Mammary epithelial cell (primary cell): ENCODE measurements at regions of chr10 and their contacts with region 1.

Region 1: GRCh38 chr10:17029581-17030271 is 99.9 kb downstream of the CUBN start:
- DNase-seq: peak; percentile 65
- H3K4me3 ChIP-seq: no peak overlapping the region
- H3K27ac ChIP-seq: no peak overlapping the region
- H3K4me1 ChIP-seq: peaks cover 32% of the 10 kb centered on the region
- H3K27me3 ChIP-seq: no peaks in the 10 kb centered on the region
- CTCF ChIP-seq: no peak

Region 2: DNA sequence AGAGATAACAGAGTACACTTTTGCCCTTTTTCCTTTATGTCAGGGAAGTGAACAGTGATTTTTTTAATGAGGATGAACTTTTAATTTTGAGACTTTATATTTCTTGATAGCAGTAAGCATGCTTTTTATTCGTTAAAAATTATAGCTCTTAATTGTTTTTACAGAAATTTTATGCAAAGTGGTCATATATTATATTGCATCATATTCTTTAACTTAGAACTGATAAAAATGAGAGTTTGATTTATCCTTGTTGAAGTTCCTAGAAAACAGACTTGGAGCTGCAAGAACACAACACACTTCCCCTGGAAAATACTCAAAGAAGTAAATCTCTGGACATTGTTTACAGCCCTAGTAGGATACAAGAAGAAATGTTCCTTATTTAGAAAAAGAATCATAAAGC is 1148.2 kb before region 1 on chr10:
- CTCF ChIA-PET with region 1: no interaction called
- dilution Hi-C with region 1: no loop called
- in situ Hi-C with region 1: no loop called
- intact Hi-C with region 1: no loop called
- DNase-seq: no peak
- H3K4me3 ChIP-seq: no peak overlapping the region
- H3K27ac ChIP-seq: no peak overlapping the region
- H3K4me1 ChIP-seq: no peaks in the 10 kb centered on the region
- H3K27me3 ChIP-seq: no peaks in the 10 kb centered on the region
- CTCF ChIP-seq: no peak

Region 3: DNA sequence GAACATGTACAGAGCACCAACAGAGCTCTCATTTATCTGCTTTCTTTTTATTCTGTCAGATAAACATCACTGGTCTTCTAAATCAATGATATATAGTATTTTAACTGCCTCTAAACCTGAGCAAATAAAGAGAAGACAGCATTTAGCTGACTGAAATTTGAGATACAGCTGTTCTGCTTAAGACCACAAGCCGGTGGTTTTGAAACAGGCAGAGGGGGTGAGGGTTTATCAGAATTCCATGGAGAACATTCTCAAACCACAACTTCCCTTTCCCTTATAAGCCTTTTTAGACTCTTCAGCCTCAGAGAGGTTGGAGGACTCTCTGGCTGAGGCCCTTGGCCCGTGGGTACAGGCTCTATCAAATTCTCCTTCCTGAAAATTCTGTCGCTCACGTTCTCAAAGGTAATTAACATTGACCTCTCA is 125.1 kb before region 1 on chr10:
- CTCF ChIA-PET with region 1: no interaction called
- dilution Hi-C with region 1: no loop called
- in situ Hi-C with region 1: no loop called
- intact Hi-C with region 1: no loop called
- DNase-seq: no peak
- H3K4me3 ChIP-seq: no peak overlapping the region
- H3K27ac ChIP-seq: no peak overlapping the region
- H3K4me1 ChIP-seq: no peaks in the 10 kb centered on the region
- H3K27me3 ChIP-seq: no peaks in the 10 kb centered on the region
- CTCF ChIP-seq: no peak

Region 4: GRCh38 chr10:17062955-17063484 is 33.3 kb after region 1 on chr10:
- CTCF ChIA-PET with region 1: no interaction called
- dilution Hi-C with region 1: no loop called
- in situ Hi-C with region 1: no loop called
- intact Hi-C with region 1: no loop called
- DNase-seq: peak; percentile 94
- H3K4me3 ChIP-seq: peak overlapping the region in 2 of 3 experiments; percentile 10 to 24
- H3K27ac ChIP-seq: peak overlapping the region; percentile 99
- H3K4me1 ChIP-seq: peaks cover 43% of the 10 kb centered on the region
- H3K27me3 ChIP-seq: no peaks in the 10 kb centered on the region
- CTCF ChIP-seq: no peak

Region 5: DNA sequence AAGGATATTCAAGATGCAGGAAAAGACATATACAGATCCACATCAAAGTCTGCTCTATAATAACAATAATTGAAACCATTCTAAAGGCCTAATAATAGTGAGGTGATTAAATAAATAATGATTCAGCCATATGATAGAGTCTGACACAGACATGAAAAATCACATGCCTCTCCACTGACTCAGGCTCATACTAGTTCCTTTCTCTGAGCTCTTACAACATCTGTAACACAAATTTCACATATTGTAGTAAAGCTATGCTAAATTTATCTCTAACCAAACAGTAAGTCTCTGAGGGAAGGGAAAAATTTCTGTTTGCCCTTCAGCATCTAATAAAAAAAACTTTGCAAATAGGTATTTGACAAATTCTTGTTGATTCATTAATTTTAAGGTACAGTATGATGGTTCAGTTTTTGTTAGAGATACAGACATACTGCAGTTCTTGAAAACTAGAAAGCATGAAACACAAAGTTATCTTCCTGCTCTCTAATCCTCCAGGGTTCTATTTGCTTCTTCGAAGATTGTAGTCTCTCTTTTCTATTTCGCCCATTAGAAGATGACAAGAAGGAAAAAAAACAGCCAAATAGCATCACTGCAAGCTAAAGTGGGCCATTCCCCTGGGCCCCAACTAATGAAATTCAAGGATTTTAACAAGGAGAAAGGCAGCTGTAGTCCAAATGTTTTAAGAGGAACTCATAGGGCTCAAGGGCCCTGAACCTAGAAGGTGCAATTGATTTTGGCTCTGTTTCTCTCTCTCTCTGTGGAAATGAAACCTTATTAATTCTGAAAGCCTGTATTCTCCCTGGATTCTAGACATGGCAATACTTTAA is 46.0 kb after region 1 on chr10:
- CTCF ChIA-PET with region 1: no interaction called
- dilution Hi-C with region 1: no loop called
- in situ Hi-C with region 1: no loop called
- intact Hi-C with region 1: loop called (anchors 5 kb)
- DNase-seq: peak; percentile 90
- H3K4me3 ChIP-seq: no peak overlapping the region
- H3K27ac ChIP-seq: peak overlapping the region; percentile 96
- H3K4me1 ChIP-seq: peaks cover 46% of the 10 kb centered on the region
- H3K27me3 ChIP-seq: no peaks in the 10 kb centered on the region
- CTCF ChIP-seq: no peak